Transverse colon (tissue), 4 donors: ENCODE measurements at regions of chr6 and their contacts with region 1.

Region 1: DNA sequence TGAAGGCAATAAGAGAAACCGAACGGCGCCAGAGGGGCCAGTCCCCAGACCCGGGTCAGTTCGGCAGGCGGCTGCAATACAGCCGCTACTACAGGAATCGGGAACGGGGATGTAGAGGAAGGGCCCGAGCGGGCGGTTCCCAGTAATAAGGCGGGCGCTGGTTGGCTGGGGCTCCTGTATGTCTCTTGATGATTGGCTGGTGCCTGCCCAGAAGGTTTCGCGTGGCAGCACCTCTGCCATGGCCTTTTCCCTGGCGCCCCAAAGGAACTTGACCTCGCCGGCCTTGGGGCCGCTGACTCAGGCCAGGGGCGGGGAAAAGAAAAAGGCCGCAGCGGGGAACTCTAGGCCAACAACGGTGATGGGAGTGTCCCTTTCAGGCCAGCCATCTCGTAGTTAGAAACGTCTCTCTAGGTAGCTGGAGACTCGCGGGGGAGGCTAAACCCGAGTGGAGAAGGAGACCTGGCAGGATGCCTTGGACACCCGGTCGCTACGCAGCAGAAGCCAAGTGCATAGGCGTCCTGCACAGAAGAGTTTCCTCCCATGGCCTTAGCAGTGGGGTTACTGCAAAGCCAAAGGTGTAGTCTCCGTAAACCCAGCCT is at the start of gene IBTK:
- DNase-seq: peak; percentile 96
- H3K4me3 ChIP-seq: peak within 1 kb of the TSS; percentile 75 to 86 (median 80)
- H3K27ac ChIP-seq: peak within 1 kb of the TSS; percentile 94 to 97 (median 95)
- H3K4me1 ChIP-seq: peaks cover 15 to 40% (median 23%) of the 10 kb centered on the region in 4 donors
- H3K27me3 ChIP-seq: no peaks in the 10 kb centered on the region
- CTCF ChIP-seq: no peak
- EP300 ChIP-seq: no peak
- POLR2A ChIP-seq: peak; percentile 88
- total RNA-seq, gene IBTK: 23.6 to 40.5 (median 34.4) TPM

Region 2: DNA sequence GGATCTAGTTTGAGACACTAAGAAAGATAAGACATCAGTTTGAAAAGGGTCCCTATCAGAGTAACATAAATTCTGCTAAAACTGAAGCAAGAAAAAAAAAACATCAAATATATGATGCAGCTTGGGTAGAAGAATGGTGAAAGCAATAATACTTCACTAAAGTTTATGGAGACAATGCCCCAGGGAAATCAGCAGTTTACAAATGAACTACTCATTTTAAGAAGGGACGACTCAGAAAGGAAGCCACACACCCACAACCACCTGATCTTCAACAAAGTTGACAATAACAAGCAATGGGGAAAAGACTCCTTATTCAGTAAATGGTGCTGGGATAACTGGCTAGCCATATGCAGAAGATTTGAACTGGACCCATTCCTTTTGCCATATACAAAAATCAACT is 259.4 kb after region 1 on chr6:
- in situ Hi-C with region 1: no loop called
- intact Hi-C with region 1: no loop called
- DNase-seq: no peak
- H3K4me3 ChIP-seq: no peak overlapping the region
- H3K27ac ChIP-seq: no peak overlapping the region
- H3K4me1 ChIP-seq: no peaks in the 10 kb centered on the region
- H3K27me3 ChIP-seq: no peaks in the 10 kb centered on the region
- CTCF ChIP-seq: no peak
- EP300 ChIP-seq: no peak
- POLR2A ChIP-seq: no peak

Region 3: GRCh38 chr6:83192871-83193746 is 945.4 kb after region 1 on chr6 and contains the starts of genes PGM3 and RWDD2A:
- in situ Hi-C with region 1: loop called in 1 of 4 experiments (anchors 25 kb)
- intact Hi-C with region 1: no loop called
- DNase-seq: peak; percentile 94
- H3K4me3 ChIP-seq: peak within 1 kb of the TSS; percentile 79 to 97 (median 90)
- H3K27ac ChIP-seq: peak within 1 kb of the TSS; percentile 85 to 87 (median 86)
- H3K4me1 ChIP-seq: peaks cover 5 to 28% (median 12%) of the 10 kb centered on the region in 4 donors
- H3K27me3 ChIP-seq: no peaks in the 10 kb centered on the region
- CTCF ChIP-seq: no peak
- EP300 ChIP-seq: no peak
- POLR2A ChIP-seq: peak; percentile 88
- total RNA-seq, gene PGM3: 7.9 to 291 (median 21.1) TPM
- total RNA-seq, gene RWDD2A: 0.20 to 3.5 (median 1.7) TPM

Region 4: GRCh38 chr6:83215131-83216047 is 967.7 kb after region 1 on chr6:
- in situ Hi-C with region 1: loop called in 1 of 4 experiments (anchors 25 kb)
- intact Hi-C with region 1: no loop called
- DNase-seq: peak; percentile 51
- H3K4me3 ChIP-seq: no peak overlapping the region
- H3K27ac ChIP-seq: no peak overlapping the region
- H3K4me1 ChIP-seq: no peaks in the 10 kb centered on the region
- H3K27me3 ChIP-seq: no peaks in the 10 kb centered on the region
- CTCF ChIP-seq: peak; percentile 66 to 76 (median 68)
- EP300 ChIP-seq: no peak
- POLR2A ChIP-seq: no peak